BJ (cell line): ENCODE measurements at regions of chr11 and their contacts with region 1.

Region 1: DNA sequence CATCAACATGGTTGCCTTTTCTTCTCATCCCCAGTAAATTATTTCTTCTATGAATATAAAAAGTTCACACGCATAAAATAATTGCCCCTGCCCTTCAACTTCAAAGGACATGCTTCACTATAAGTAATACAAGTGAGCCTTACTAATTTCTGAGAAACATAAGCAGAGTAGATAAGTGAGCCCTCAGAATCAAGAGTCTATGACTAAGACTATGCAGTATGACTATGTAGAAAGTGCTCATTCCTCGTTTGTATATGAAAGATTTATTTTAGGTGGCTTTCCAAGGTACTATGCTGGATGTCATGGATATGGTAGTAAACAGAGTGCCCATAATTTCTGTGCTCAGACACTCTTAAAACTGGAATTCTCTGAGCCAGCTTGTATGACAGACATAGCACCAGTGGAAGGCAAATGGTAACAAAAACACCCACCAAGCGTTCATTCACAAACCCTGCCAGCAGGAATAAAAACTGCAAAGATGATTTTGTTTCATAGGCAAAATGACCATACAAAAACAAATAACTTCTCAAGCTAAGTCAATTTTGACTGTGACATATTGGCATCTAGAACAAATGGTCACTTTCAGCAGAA is 189.8 kb downstream of the CADM1 start:
- DNase-seq: no peak
- H3K4me3 ChIP-seq: no peak overlapping the region
- H3K27me3 ChIP-seq: no peaks in the 10 kb centered on the region
- CTCF ChIP-seq: no peak

Region 2: GRCh38 chr11:115324581-115325432 is 10.4 kb after region 1 on chr11:
- CTCF ChIA-PET with region 1: interaction called, 11 read pairs
- POLR2A ChIA-PET with region 1: no interaction called
- DNase-seq: no peak
- H3K4me3 ChIP-seq: no peak overlapping the region
- H3K27me3 ChIP-seq: no peaks in the 10 kb centered on the region
- CTCF ChIP-seq: peak; percentile 81